CD4-positive, alpha-beta T cell (primary cell): ENCODE measurements at regions of chr12 and their contacts with region 1.

Region 1: GRCh38 chr12:10771132-10771733 is 31.2 kb downstream of the TAS2R7 start:
- DNase-seq: peak in 3 of 14 experiments; percentile 61 to 69 (median 65)
- ATAC-seq: peak; percentile 76
- H3K4me3 ChIP-seq: no peak overlapping the region
- H3K4me3 Mint-ChIP-seq: no peak overlapping the region
- H3K27ac ChIP-seq: no peak overlapping the region
- H3K27ac Mint-ChIP-seq: no peak overlapping the region
- H3K4me1 ChIP-seq: no peaks in the 10 kb centered on the region
- H3K4me1 Mint-ChIP-seq: no peaks in the 10 kb centered on the region
- H3K27me3 ChIP-seq: peaks cover 0 to 32% of the 10 kb centered on the region in 2 experiments
- H3K27me3 Mint-ChIP-seq: peaks cover 46% of the 10 kb centered on the region
- CTCF ChIP-seq: peak; percentile 75

Region 2: GRCh38 chr12:10726940-10727339 is 44.3 kb before region 1 on chr12:
- CTCF ChIA-PET with region 1: no interaction called
- POLR2A ChIA-PET with region 1: no interaction called
- intact Hi-C with region 1: no loop called
- DNase-seq: no peak
- ATAC-seq: no peak
- H3K4me3 ChIP-seq: no peak overlapping the region
- H3K4me3 Mint-ChIP-seq: no peak overlapping the region
- H3K27ac ChIP-seq: no peak overlapping the region
- H3K27ac Mint-ChIP-seq: no peak overlapping the region
- H3K4me1 ChIP-seq: peaks cover 12% of the 10 kb centered on the region
- H3K4me1 Mint-ChIP-seq: peaks cover 14% of the 10 kb centered on the region
- H3K27me3 ChIP-seq: peaks cover 14 to 25% of the 10 kb centered on the region in 2 experiments
- H3K27me3 Mint-ChIP-seq: peaks cover 54% of the 10 kb centered on the region
- CTCF ChIP-seq: no peak

Region 3: GRCh38 chr12:10968765-10969456 is 197.7 kb after region 1 on chr12:
- CTCF ChIA-PET with region 1: no interaction called
- POLR2A ChIA-PET with region 1: no interaction called
- intact Hi-C with region 1: loop called in 1 of 2 experiments (anchors 10 kb)
- DNase-seq: no peak
- ATAC-seq: no peak
- H3K4me3 ChIP-seq: no peak overlapping the region
- H3K4me3 Mint-ChIP-seq: no peak overlapping the region
- H3K27ac ChIP-seq: no peak overlapping the region
- H3K27ac Mint-ChIP-seq: no peak overlapping the region
- H3K4me1 ChIP-seq: no peaks in the 10 kb centered on the region
- H3K4me1 Mint-ChIP-seq: peaks cover 10% of the 10 kb centered on the region
- H3K27me3 ChIP-seq: no peaks in the 10 kb centered on the region
- H3K27me3 Mint-ChIP-seq: no peaks in the 10 kb centered on the region
- CTCF ChIP-seq: no peak

Region 4: DNA sequence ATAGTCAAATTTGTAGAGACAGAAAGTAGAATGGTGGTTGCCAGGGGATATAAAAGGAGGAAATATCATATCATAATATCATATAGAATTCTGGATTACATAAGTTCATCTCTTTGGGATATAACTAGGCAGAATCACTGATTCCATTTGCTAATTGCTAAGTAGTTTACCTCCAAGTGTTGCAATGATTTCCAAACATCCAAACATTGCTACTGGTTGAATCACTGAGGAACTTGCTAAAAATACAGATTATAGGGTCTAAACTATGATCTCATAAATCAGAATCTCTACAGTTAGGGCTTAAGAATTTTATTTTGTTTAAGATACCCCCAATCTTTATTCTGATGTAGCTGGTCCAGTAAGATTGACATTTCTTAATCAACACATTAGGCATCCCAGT is 431.6 kb after region 1 on chr12:
- CTCF ChIA-PET with region 1: interaction called, 10 read pairs
- POLR2A ChIA-PET with region 1: no interaction called
- intact Hi-C with region 1: loop called (anchors 1 kb)
- DNase-seq: no peak
- ATAC-seq: no peak
- H3K4me3 ChIP-seq: no peak overlapping the region
- H3K4me3 Mint-ChIP-seq: no peak overlapping the region
- H3K27ac ChIP-seq: no peak overlapping the region
- H3K27ac Mint-ChIP-seq: no peak overlapping the region
- H3K4me1 ChIP-seq: no peaks in the 10 kb centered on the region
- H3K4me1 Mint-ChIP-seq: no peaks in the 10 kb centered on the region
- H3K27me3 ChIP-seq: no peaks in the 10 kb centered on the region
- H3K27me3 Mint-ChIP-seq: no peaks in the 10 kb centered on the region
- CTCF ChIP-seq: no peak

Region 5: DNA sequence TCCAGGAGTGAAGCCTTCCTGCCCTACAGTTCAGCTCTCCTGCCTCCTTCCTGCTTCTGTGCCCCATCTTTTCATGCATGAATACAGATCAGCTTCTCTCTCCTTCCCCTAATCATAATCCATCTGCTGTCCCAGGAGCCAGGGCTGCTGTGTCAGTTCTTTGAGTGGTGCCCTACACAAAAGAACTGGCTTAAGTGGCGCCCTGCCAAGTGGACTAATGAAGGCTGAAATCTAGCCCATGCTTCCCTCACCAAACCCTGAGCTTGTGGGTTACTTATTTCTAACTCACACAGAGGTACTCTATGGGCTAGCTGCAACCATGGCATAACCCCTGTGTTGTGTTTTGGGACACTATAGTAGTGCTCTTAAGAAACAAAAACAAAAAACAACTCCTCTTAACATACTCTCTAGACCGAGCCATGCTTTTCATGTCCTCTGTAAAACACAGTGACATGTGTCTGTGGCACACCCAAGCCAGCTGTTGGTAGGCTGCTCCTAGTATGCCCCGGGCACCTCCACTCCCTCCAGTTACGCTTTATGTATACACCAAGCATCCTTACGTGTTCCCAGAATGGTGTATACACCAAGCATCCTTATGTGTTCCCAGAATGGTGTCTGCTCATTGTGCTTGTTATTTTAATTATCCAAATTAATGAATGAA is 858.9 kb after region 1 on chr12:
- CTCF ChIA-PET with region 1: no interaction called
- POLR2A ChIA-PET with region 1: no interaction called
- intact Hi-C with region 1: no loop called
- DNase-seq: no peak
- ATAC-seq: no peak
- H3K4me3 ChIP-seq: no peak overlapping the region
- H3K4me3 Mint-ChIP-seq: no peak overlapping the region
- H3K27ac ChIP-seq: no peak overlapping the region
- H3K27ac Mint-ChIP-seq: no peak overlapping the region
- H3K4me1 ChIP-seq: no peaks in the 10 kb centered on the region
- H3K4me1 Mint-ChIP-seq: no peaks in the 10 kb centered on the region
- H3K27me3 ChIP-seq: no peaks in the 10 kb centered on the region
- H3K27me3 Mint-ChIP-seq: no peaks in the 10 kb centered on the region
- CTCF ChIP-seq: no peak

Region 6: GRCh38 chr12:12327802-12328201 is 1556.6 kb after region 1 on chr12:
- CTCF ChIA-PET with region 1: no interaction called
- POLR2A ChIA-PET with region 1: no interaction called
- intact Hi-C with region 1: loop called in 1 of 2 experiments (anchors 2 kb)
- DNase-seq: peak in 5 of 14 experiments; percentile 7 to 82 (median 74)
- ATAC-seq: peak; percentile 92
- H3K4me3 ChIP-seq: no peak overlapping the region
- H3K4me3 Mint-ChIP-seq: no peak overlapping the region
- H3K27ac ChIP-seq: no peak overlapping the region
- H3K27ac Mint-ChIP-seq: peak overlapping the region; percentile 21
- H3K4me1 ChIP-seq: peaks cover 4% of the 10 kb centered on the region
- H3K4me1 Mint-ChIP-seq: peaks cover 14% of the 10 kb centered on the region
- H3K27me3 ChIP-seq: no peaks in the 10 kb centered on the region
- H3K27me3 Mint-ChIP-seq: no peaks in the 10 kb centered on the region
- CTCF ChIP-seq: peak; percentile 81